ENCODE measurements at regions of chr9 and their contacts with region 1.

Region 1: GRCh38 chr9:135410831-135411473 is 68.6 kb upstream of the PPP1R26 start:
- DNase-seq: no peak
- H3K4me3 ChIP-seq: no peak overlapping the region
- H3K27ac ChIP-seq: no peak overlapping the region
- H3K4me1 ChIP-seq: no peaks in the 10 kb centered on the region
- H3K27me3 ChIP-seq: no peaks in the 10 kb centered on the region
- CTCF ChIP-seq: no peak

Region 2: DNA sequence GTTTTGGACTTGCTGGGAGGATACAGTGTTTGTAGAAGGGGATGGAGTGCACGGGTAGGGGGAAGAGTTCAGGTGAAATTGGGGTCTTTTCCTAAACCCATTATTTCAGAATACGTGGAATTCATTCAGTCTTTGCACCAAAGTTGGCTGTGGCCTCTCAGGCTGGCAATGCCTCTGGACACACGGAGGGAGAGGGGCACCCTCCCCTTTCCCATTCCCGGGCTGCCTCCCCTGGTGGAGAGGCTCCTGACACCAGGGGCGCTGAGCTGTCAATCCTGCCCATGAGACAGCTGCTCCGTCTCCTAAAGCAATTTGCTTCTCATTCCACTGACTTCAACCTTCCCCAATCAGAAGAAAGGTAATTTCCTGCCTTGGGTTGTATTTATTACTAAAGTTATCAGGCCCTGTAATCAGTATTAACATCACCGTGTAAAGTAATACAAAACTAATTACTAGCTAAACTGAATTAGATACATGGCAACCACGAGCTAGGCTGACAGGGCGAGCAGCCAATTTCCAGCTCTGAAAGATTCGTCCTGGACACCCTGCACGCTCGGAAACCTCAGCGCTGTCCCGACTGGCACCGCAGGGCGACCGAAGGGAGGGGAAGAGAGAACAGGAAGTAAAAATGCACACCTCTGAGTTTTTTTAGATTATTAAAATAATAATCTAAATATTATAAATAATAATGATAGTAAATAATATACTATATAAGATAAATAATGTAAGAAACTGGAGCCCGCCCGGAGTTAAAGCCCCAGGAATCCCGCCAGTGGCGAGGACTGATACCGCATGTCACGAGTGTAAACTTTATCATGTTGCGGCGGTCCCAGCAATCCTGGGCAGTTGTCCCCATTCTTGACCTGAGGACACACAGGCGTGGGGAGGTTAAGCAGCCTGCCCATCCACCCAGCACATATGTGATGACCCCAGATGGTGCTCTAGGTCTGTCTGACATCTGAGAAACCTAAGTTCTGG is 330.4 kb before region 1 on chr9:
- intact Hi-C with region 1: loop called (anchors 5 kb)
- DNase-seq: peak in 2 of 5 donors; percentile 20 to 43
- H3K4me3 ChIP-seq: no peak overlapping the region
- H3K27ac ChIP-seq: no peak overlapping the region
- H3K4me1 ChIP-seq: no peaks in the 10 kb centered on the region
- H3K27me3 ChIP-seq: peaks cover 12% of the 10 kb centered on the region
- CTCF ChIP-seq: no peak

Region 3: GRCh38 chr9:135478858-135479468 is 68.0 kb after region 1 on chr9:
- intact Hi-C with region 1: no loop called
- DNase-seq: peak; percentile 55 to 77 (median 72)
- H3K4me3 ChIP-seq: peak overlapping the region in 2 of 3 donors; percentile 19 to 63
- H3K27ac ChIP-seq: peak overlapping the region; percentile 80 to 89
- H3K4me1 ChIP-seq: peaks cover 0 to 8% (median 0%) of the 10 kb centered on the region in 3 donors
- H3K27me3 ChIP-seq: no peaks in the 10 kb centered on the region
- CTCF ChIP-seq: no peak

Region 4: GRCh38 chr9:135783540-135784245 is 372.7 kb after region 1 on chr9:
- intact Hi-C with region 1: no loop called
- DNase-seq: no peak
- H3K4me3 ChIP-seq: no peak overlapping the region
- H3K27ac ChIP-seq: no peak overlapping the region
- H3K4me1 ChIP-seq: no peaks in the 10 kb centered on the region
- H3K27me3 ChIP-seq: no peaks in the 10 kb centered on the region
- CTCF ChIP-seq: no peak

Measured in kidney (tissue), 22 donors.